IMR-90 (cell line): ENCODE measurements at regions of chr14 and their contacts with region 1.

Region 1: GRCh38 chr14:23631702-23632460 is 4.3 kb upstream of the DHRS2 start:
- DNase-seq: peak; percentile 75
- ATAC-seq: peak; percentile 95
- H3K4me3 ChIP-seq: no peak overlapping the region
- H3K27ac ChIP-seq: no peak overlapping the region; the same call in 1 of the 2 replicates
- H3K4me1 ChIP-seq: peaks cover 2% of the 10 kb centered on the region; the same call in 1 of the 2 replicates
- H3K27me3 ChIP-seq: peaks cover 3% of the 10 kb centered on the region; the same call in 1 of the 2 replicates
- CTCF ChIP-seq: peak; percentile 85
- POLR2A ChIP-seq: no peak
- RAD21 ChIP-seq: peak; percentile 72

Region 2: GRCh38 chr14:23478111-23478759 is 153.6 kb before region 1 on chr14:
- CTCF ChIA-PET with region 1: no interaction called
- POLR2A ChIA-PET with region 1: no interaction called
- dilution Hi-C with region 1: no loop called
- in situ Hi-C with region 1: no loop called
- intact Hi-C with region 1: loop called (anchors 5 kb)
- DNase-seq: peak; percentile 74
- ATAC-seq: peak; percentile 80
- H3K4me3 ChIP-seq: no peak overlapping the region
- H3K27ac ChIP-seq: no peak overlapping the region
- H3K4me1 ChIP-seq: no peaks in the 10 kb centered on the region
- H3K27me3 ChIP-seq: no peaks in the 10 kb centered on the region
- CTCF ChIP-seq: peak; percentile 84
- POLR2A ChIP-seq: no peak
- RAD21 ChIP-seq: peak; percentile 80

Region 3: GRCh38 chr14:23588884-23589598 is 42.8 kb before region 1 on chr14:
- CTCF ChIA-PET with region 1: interaction called, 4 read pairs
- POLR2A ChIA-PET with region 1: no interaction called
- dilution Hi-C with region 1: no loop called
- in situ Hi-C with region 1: no loop called
- intact Hi-C with region 1: loop called (anchors 2 kb)
- DNase-seq: peak; percentile 84
- ATAC-seq: peak; percentile 100
- H3K4me3 ChIP-seq: no peak overlapping the region
- H3K27ac ChIP-seq: no peak overlapping the region
- H3K4me1 ChIP-seq: no peaks in the 10 kb centered on the region
- H3K27me3 ChIP-seq: no peaks in the 10 kb centered on the region
- CTCF ChIP-seq: peak; percentile 87
- POLR2A ChIP-seq: no peak
- RAD21 ChIP-seq: peak; percentile 78

Region 4: DNA sequence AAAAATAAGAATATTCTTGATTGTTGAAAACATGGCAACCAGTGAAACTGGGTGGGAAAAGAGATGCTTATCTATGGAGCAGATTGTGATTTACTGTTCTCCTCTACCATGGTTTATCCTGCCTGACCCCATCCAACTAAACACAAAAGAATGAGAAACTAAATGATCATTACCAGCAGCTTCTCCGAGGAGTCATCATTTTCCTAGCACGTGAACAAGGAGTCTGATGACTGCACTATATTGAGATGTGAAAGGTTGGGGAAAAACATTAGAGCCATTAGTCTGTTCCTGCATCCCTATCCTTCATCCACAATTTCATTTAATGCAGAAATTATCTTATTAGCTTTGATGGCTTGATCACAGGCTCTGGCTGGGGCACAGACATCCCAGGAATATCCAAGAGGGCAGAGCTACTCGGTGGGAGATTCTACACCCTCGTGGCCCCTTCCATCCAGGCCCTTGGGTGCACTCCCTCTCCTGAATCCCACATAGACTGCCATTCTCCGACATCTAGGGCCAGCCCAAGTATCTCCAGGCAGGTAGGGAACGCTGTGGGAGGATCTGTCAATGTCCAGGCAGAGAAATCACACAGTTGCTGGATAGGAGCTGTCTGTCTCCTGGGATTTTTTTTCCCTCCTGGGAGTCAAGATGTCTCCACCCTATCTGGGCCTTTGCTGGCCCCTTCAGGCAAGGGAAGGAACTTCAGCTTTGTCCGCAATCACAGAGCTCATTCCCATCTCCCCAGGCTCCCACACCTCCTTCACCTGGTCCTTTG is 278.4 kb after region 1 on chr14:
- CTCF ChIA-PET with region 1: interaction called, 14 read pairs
- POLR2A ChIA-PET with region 1: no interaction called
- dilution Hi-C with region 1: no loop called
- in situ Hi-C with region 1: no loop called
- intact Hi-C with region 1: loop called (anchors 1 kb)
- DNase-seq: peak; percentile 48
- ATAC-seq: peak; percentile 98
- H3K4me3 ChIP-seq: no peak overlapping the region
- H3K27ac ChIP-seq: no peak overlapping the region
- H3K4me1 ChIP-seq: no peaks in the 10 kb centered on the region
- H3K27me3 ChIP-seq: peaks cover 3% of the 10 kb centered on the region; the same call in 1 of the 2 replicates
- CTCF ChIP-seq: peak; percentile 81
- POLR2A ChIP-seq: no peak
- RAD21 ChIP-seq: peak; percentile 87

Region 5: DNA sequence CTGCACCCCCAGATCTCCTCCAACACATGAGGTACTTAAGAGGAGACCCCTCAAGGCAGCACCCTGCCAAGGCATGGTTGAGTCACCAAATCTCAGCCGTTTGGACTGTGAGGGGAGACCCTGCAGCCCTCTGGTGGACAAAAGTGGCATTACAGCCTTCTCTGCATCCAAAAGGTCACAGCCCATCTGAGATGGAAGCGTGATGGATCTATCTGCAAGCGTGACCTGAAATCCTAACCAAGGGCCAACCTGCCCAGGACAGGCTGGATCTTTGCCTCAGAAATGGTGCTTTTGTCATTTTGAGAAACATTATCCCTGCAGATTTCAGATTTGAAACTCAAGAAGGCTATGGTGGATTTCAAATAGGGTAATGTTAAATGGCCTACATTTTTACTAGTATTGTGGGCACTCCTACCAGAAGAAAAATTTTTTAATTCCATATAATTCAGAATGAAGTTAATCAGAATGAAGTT is 298.0 kb after region 1 on chr14:
- CTCF ChIA-PET with region 1: interaction called, 6 read pairs
- POLR2A ChIA-PET with region 1: no interaction called
- dilution Hi-C with region 1: no loop called
- in situ Hi-C with region 1: no loop called
- intact Hi-C with region 1: loop called (anchors 1 kb)
- DNase-seq: peak; percentile 69
- ATAC-seq: peak; percentile 99
- H3K4me3 ChIP-seq: no peak overlapping the region
- H3K27ac ChIP-seq: no peak overlapping the region
- H3K4me1 ChIP-seq: no peaks in the 10 kb centered on the region
- H3K27me3 ChIP-seq: peaks cover 4% of the 10 kb centered on the region; the same call in 1 of the 2 replicates
- CTCF ChIP-seq: peak; percentile 78
- POLR2A ChIP-seq: no peak
- RAD21 ChIP-seq: peak; percentile 69

Region 6: DNA sequence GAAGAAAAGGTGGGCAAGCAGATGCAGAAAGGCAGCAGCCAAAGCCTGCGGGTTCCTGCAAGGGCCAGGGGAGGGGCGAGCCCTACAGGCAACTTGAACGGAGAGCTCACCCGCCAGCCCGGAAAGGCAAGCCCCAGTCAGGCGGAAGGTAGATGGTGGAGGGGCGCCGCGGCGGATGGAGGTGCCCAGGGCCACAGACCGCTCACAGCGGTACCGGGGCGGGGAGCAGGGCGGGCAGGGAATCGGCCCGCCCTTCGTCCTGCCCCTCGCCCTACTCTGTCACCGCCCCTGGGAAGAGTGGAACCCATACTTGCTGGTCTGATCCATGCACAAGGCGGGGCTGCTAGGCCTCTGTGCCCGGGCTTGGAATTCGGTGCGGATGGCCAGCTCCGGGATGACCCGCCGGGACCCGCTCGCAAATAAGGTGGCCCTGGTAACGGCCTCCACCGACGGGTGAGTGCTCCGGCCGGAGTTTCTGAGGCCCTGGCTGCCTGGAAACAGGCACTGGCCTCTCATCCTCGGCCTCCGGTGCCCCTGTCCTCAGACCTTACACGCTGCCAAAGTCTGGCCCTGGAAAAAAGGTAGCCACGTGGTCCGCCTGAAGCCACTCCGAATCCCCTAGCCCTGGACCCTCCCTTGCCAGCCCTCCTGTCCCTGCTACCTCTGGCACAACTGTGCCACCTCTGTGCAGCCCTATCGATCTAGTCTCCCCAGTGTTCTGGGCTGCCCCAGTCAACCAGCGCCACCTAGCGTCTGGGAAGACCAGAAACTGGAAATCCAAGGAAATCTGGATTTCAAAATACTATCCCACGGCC is 321.8 kb after region 1 on chr14 and contains the start of gene DHRS4:
- CTCF ChIA-PET with region 1: no interaction called
- POLR2A ChIA-PET with region 1: no interaction called
- dilution Hi-C with region 1: no loop called
- in situ Hi-C with region 1: no loop called
- intact Hi-C with region 1: loop called (anchors 5 kb)
- DNase-seq: peak; percentile 76
- ATAC-seq: peak; percentile 100
- H3K4me3 ChIP-seq: peak within 1 kb of the TSS; percentile 98
- H3K27ac ChIP-seq: peak within 1 kb of the TSS; percentile 70
- H3K4me1 ChIP-seq: peaks cover 2% of the 10 kb centered on the region; the same call in 1 of the 2 replicates
- H3K27me3 ChIP-seq: no peaks in the 10 kb centered on the region
- CTCF ChIP-seq: peak; percentile 84
- POLR2A ChIP-seq: peak; percentile 66
- RAD21 ChIP-seq: peak; percentile 63
- total RNA-seq, gene DHRS4: 43.2 and 48.9 TPM in 2 replicates